CD4-positive, alpha-beta memory T cell (primary cell): ENCODE measurements at regions of chr5 and their contacts with region 1.

Region 1: GRCh38 chr5:111512375-111513130 is at the start of gene STARD4:
- DNase-seq: peak; percentile 91 to 95 (median 93)
- H3K4me3 ChIP-seq: peak within 1 kb of the TSS; percentile 37 to 77
- H3K4me3 Mint-ChIP-seq: peak within 1 kb of the TSS; percentile 98 to 99 (median 98)
- H3K27ac ChIP-seq: peak within 1 kb of the TSS; percentile 77
- H3K27ac Mint-ChIP-seq: peak within 1 kb of the TSS; percentile 94 to 99 (median 97)
- H3K4me1 ChIP-seq: peaks cover 35% of the 10 kb centered on the region
- H3K4me1 Mint-ChIP-seq: peaks cover 24 to 48% (median 29%) of the 10 kb centered on the region in 4 donors
- H3K27me3 ChIP-seq: no peaks in the 10 kb centered on the region
- H3K27me3 Mint-ChIP-seq: no peaks in the 10 kb centered on the region
- total RNA-seq, gene STARD4: 12.4 to 17.2 TPM

Region 2: DNA sequence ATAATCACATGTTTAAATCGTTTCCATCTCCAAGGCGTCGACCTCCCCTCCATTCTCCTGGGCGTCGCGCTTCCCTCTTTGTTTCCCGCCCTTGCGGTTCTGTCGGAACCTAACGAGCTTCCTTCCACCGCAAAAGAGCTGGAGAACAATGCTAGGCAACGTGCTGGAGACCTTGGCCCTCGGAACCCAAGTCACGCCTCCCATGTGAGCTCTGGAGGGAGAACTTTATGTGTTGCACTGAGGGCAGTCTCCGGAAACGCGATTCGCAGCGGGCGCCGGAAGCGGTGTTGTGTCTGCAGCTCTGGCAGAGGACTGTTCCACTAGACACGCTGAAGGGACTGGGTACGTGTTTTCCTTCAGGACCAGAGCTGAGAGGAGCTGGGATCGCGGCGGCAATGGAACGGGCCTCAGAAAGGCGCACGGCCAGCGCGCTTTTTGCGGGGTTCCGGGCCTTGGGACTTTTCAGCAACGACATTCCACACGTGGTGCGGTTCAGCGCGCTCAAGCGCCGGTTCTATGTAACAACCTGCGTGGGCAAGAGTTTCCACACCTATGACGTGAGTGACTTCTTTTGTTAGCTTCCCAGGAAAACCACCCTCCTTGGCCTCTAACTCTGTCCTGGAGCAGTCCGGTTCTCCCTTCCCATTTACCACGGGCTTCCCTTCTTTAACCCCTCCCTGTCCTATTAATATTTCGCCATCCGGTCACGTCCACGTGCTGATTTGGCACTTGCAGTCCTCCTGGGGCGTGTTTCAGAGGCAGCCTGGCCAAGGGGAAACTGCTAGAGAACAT is 420.3 kb before region 1 on chr5 and contains the start of gene WDR36:
- CTCF ChIA-PET with region 1: no interaction called
- POLR2A ChIA-PET with region 1: no interaction called
- intact Hi-C with region 1: loop called (anchors 2 kb)
- DNase-seq: peak; percentile 85 to 91 (median 87)
- H3K4me3 ChIP-seq: peak within 1 kb of the TSS; percentile 82 to 90
- H3K4me3 Mint-ChIP-seq: peak within 1 kb of the TSS; percentile 90 to 98 (median 97)
- H3K27ac ChIP-seq: peak within 1 kb of the TSS; percentile 73
- H3K27ac Mint-ChIP-seq: peak within 1 kb of the TSS; percentile 83 to 98 (median 96)
- H3K4me1 ChIP-seq: peaks cover 25% of the 10 kb centered on the region
- H3K4me1 Mint-ChIP-seq: peaks cover 15 to 34% (median 27%) of the 10 kb centered on the region in 4 donors
- H3K27me3 ChIP-seq: no peaks in the 10 kb centered on the region
- H3K27me3 Mint-ChIP-seq: peaks cover 1 to 7% of the 10 kb centered on the region in 2 donors
- total RNA-seq, gene WDR36: 26.3 to 27.6 TPM

Region 3: DNA sequence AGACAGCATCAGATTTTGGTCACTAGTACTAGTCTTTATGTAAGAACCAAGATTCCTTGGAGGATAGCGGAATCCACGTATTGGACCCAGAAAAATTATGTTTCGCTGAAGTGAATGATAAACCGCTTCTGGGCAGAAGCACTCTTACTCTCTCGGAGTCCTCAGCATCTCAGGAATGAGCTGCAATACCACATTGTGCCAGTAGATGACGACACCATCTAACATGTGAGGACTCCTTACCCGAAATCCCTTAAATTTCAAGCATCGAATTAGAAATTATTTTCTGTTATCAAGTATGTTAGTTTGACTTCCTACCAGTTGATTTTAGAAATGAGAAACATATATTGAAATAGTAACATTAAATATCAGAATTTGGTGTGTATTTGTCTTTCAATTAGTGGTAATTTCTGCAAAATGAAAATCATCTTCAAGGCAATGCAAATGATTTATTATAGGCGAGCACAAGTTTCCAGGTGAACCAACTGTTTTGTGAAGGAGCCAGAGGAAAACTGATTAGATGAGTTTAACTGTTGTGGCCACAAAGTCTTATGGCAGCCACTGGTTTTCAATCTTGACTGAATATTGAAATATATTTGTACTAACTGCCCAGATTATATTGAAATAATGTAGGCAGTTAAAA is 354.3 kb before region 1 on chr5:
- CTCF ChIA-PET with region 1: no interaction called
- POLR2A ChIA-PET with region 1: no interaction called
- intact Hi-C with region 1: loop called (anchors 2 kb)
- DNase-seq: peak; percentile 66 to 79 (median 72)
- H3K4me3 ChIP-seq: no peak overlapping the region
- H3K4me3 Mint-ChIP-seq: peak overlapping the region in 1 of 8 donors; percentile 15
- H3K27ac ChIP-seq: no peak overlapping the region
- H3K27ac Mint-ChIP-seq: no peak overlapping the region
- H3K4me1 ChIP-seq: no peaks in the 10 kb centered on the region
- H3K4me1 Mint-ChIP-seq: peaks cover 0 to 6% (median 3%) of the 10 kb centered on the region in 4 donors
- H3K27me3 ChIP-seq: no peaks in the 10 kb centered on the region
- H3K27me3 Mint-ChIP-seq: peaks cover 4 to 7% of the 10 kb centered on the region in 2 donors

Region 4: GRCh38 chr5:111229871-111230810 is 282.4 kb before region 1 on chr5:
- CTCF ChIA-PET with region 1: interaction called, 4 read pairs
- POLR2A ChIA-PET with region 1: no interaction called
- intact Hi-C with region 1: loop called (anchors 5 kb)
- DNase-seq: peak in 4 of 5 donors; percentile 69 to 80 (median 74)
- H3K4me3 ChIP-seq: peak overlapping the region in 1 of 2 donors; percentile 25
- H3K4me3 Mint-ChIP-seq: peak overlapping the region; percentile 77 to 94 (median 84)
- H3K27ac ChIP-seq: peak overlapping the region; percentile 82
- H3K27ac Mint-ChIP-seq: peak overlapping the region; percentile 83 to 98 (median 95)
- H3K4me1 ChIP-seq: peaks cover 84% of the 10 kb centered on the region
- H3K4me1 Mint-ChIP-seq: peaks cover 59 to 94% (median 74%) of the 10 kb centered on the region in 4 donors
- H3K27me3 ChIP-seq: no peaks in the 10 kb centered on the region
- H3K27me3 Mint-ChIP-seq: no peaks in the 10 kb centered on the region

Region 5: GRCh38 chr5:111530298-111530740 is 17.8 kb after region 1 on chr5:
- CTCF ChIA-PET with region 1: interaction called, 24 read pairs
- POLR2A ChIA-PET with region 1: interaction called, 16 read pairs
- intact Hi-C with region 1: loop called (anchors 1 kb)
- DNase-seq: peak; percentile 84 to 98 (median 87)
- H3K4me3 ChIP-seq: peak overlapping the region in 1 of 2 donors; percentile 3
- H3K4me3 Mint-ChIP-seq: peak overlapping the region; percentile 31 to 79 (median 66)
- H3K27ac ChIP-seq: peak overlapping the region; percentile 68
- H3K27ac Mint-ChIP-seq: peak overlapping the region; percentile 76 to 98 (median 89)
- H3K4me1 ChIP-seq: peaks cover 18% of the 10 kb centered on the region
- H3K4me1 Mint-ChIP-seq: peaks cover 13 to 17% (median 15%) of the 10 kb centered on the region in 4 donors
- H3K27me3 ChIP-seq: no peaks in the 10 kb centered on the region
- H3K27me3 Mint-ChIP-seq: peaks cover 0 to 1% of the 10 kb centered on the region in 2 donors

Region 6: GRCh38 chr5:111735583-111736270 is 223.2 kb after region 1 on chr5:
- CTCF ChIA-PET with region 1: no interaction called
- POLR2A ChIA-PET with region 1: no interaction called
- intact Hi-C with region 1: no loop called
- DNase-seq: no peak
- H3K4me3 ChIP-seq: no peak overlapping the region
- H3K4me3 Mint-ChIP-seq: no peak overlapping the region
- H3K27ac ChIP-seq: no peak overlapping the region
- H3K27ac Mint-ChIP-seq: no peak overlapping the region
- H3K4me1 ChIP-seq: no peaks in the 10 kb centered on the region
- H3K4me1 Mint-ChIP-seq: no peaks in the 10 kb centered on the region
- H3K27me3 ChIP-seq: no peaks in the 10 kb centered on the region
- H3K27me3 Mint-ChIP-seq: peaks cover 1% of the 10 kb centered on the region in 2 donors